Activated B cell treated with CpG ODN at 0.5 μM for 24 hours (primary cell): ENCODE measurements at regions of chr11 and their contacts with region 1.

Region 1: DNA sequence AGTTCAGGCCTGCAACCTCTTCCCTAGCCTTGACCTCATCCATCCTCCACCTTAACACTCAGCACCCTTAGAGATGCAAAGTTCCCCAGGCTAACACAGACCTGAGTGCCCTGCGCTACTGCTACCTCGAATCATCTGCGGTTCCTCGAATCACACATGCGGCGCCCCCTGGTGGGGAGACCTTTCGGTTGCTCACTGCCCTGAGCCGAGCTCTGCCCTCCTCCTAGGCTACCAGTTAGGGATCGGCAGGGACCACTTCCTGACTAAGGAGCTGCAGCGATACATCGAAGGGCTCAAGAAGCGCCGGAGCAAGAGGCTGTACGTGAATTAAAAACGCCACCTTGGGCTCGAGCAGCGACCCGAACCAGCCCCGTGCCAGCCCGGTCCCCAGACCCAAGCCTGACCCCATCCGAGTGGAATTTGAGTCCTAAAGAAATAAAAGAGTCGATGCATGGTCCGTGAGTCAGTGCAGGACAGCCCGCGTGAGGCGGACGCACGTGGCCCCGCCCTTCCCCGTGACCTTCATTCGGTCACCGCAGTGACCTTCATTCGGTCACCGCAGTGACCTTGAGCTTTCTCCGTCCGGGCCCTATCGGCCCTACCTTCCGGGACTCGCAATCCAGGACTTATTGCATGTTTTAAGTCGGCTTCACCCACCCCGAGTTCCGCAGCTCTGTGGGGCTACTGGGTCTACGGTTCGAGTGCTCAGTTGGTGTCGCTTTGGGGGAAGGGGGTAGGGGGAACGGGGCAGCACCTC is 830 bp upstream of the ESRRA start:
- DNase-seq: peak; percentile 84
- ATAC-seq: peak; percentile 13
- H3K4me3 Mint-ChIP-seq: peak overlapping the region; percentile 87
- H3K27ac Mint-ChIP-seq: peak overlapping the region; percentile 89
- H3K4me1 Mint-ChIP-seq: peaks cover 34% of the 10 kb centered on the region
- H3K27me3 Mint-ChIP-seq: peaks cover 11% of the 10 kb centered on the region
- CTCF ChIP-seq: peak; percentile 22

Region 2: DNA sequence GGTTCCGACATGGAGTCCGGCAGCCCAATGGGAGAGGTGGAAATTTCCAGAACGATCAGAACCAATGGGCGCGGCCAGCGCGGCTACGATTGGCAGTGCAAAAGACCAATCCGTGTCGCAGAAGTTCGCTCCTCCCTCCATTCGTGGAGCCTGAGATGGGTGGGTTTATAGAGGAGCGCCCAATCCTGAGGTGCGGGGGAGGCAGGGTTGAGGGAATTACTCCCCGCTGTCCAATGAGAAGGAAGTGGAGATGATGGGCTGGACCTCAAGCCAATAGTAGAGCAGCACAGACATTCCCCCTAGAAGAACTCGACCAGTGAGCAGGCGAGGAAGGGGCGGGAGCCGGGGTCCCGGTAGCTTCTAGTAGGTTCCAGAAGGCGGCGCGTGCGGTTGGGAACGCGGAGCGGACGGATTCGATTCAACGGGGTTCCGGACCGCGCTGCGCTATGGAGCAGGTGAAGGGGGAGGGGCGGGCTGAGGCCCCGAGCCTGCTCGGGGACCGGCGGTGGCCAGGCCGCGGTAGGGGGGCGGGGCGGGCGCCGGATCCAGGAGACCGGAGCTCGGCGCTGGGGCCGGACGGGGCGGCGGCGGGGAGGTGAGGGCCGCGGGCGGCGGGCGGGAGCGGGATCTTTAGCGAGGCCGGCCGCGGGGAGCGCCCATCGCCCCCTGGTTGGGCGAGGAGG is 118.5 kb before region 1 on chr11 and contains the start of gene STIP1:
- CTCF ChIA-PET with region 1: interaction called, 4 read pairs
- POLR2A ChIA-PET with region 1: interaction called, 12 read pairs
- intact Hi-C with region 1: loop called (anchors 1 kb)
- DNase-seq: peak; percentile 93
- ATAC-seq: peak; percentile 87
- H3K4me3 Mint-ChIP-seq: no peak within 1 kb of the TSS
- H3K27ac Mint-ChIP-seq: peak within 1 kb of the TSS; percentile 97
- H3K4me1 Mint-ChIP-seq: peaks cover 27% of the 10 kb centered on the region
- H3K27me3 Mint-ChIP-seq: no peaks in the 10 kb centered on the region
- CTCF ChIP-seq: no peak
- total RNA-seq, gene STIP1: 155 and 159 TPM in 2 replicates

Region 3: GRCh38 chr11:64240394-64241174 is 63.9 kb before region 1 on chr11 and contains the start of gene FKBP2:
- CTCF ChIA-PET with region 1: interaction called, 4 read pairs
- POLR2A ChIA-PET with region 1: interaction called, 24 read pairs
- intact Hi-C with region 1: loop called (anchors 1 kb)
- DNase-seq: peak; percentile 98
- ATAC-seq: peak; percentile 61
- H3K4me3 Mint-ChIP-seq: peak within 1 kb of the TSS; percentile 91
- H3K27ac Mint-ChIP-seq: peak within 1 kb of the TSS; percentile 98
- H3K4me1 Mint-ChIP-seq: peaks cover 75% of the 10 kb centered on the region
- H3K27me3 Mint-ChIP-seq: no peaks in the 10 kb centered on the region
- CTCF ChIP-seq: no peak
- total RNA-seq, gene FKBP2: 31.4 and 39.4 TPM in 2 replicates

Region 4: GRCh38 chr11:64284048-64284961 is 20.2 kb before region 1 on chr11 and contains the start of gene BAD:
- CTCF ChIA-PET with region 1: interaction called, 11 read pairs
- POLR2A ChIA-PET with region 1: interaction called, 24 read pairs
- intact Hi-C with region 1: loop called (anchors 1 kb)
- DNase-seq: peak; percentile 80
- ATAC-seq: peak; percentile 79
- H3K4me3 Mint-ChIP-seq: peak within 1 kb of the TSS; percentile 90
- H3K27ac Mint-ChIP-seq: peak within 1 kb of the TSS; percentile 92
- H3K4me1 Mint-ChIP-seq: peaks cover 20% of the 10 kb centered on the region
- H3K27me3 Mint-ChIP-seq: no peaks in the 10 kb centered on the region
- CTCF ChIP-seq: no peak
- total RNA-seq, gene BAD: 21.7 and 26.6 TPM in 2 replicates

Region 5: DNA sequence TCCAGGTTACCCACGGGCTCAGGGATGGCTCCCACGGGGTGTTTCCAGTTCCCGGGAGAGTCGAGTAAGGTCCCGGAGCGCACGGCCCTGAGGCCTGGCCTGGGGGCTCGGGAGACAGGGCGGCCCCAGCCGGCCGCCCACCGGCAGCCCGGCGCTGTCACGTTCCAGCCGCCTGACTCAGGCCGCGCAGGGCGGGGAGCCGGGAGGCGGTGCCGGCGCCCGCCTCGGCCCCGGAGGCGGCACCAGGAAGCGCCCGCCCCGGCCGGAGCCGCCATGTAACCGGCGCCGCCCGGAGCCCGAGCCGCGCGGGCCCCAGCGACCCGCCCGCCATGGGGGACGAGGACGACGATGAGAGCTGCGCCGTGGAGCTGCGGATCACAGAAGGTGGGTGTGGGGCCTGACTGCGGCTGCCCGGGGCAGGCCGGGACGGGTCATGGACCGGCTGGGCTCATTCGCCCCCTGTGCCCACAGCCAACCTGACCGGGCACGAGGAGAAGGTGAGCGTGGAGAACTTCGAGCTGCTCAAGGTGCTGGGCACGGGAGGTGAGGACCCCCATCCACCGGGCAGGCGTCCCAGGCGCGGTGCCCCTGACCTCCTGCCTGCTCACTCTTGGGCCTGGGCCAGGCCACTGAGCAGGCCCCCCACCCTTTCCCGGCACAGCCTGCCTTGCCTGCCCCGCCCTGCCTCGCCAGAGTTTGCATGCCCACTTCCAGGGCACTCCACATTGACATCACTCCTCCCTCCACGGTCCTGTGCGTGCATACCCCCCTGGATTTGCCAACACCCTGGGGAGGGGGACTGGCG is 54.6 kb after region 1 on chr11 and contains the start of gene RPS6KA4:
- CTCF ChIA-PET with region 1: interaction called, 14 read pairs
- POLR2A ChIA-PET with region 1: interaction called, 10 read pairs
- intact Hi-C with region 1: loop called (anchors 1 kb)
- DNase-seq: peak; percentile 55
- ATAC-seq: peak; percentile 72
- H3K4me3 Mint-ChIP-seq: peak within 1 kb of the TSS; percentile 82
- H3K27ac Mint-ChIP-seq: peak within 1 kb of the TSS; percentile 53
- H3K4me1 Mint-ChIP-seq: peaks cover 47% of the 10 kb centered on the region
- H3K27me3 Mint-ChIP-seq: no peaks in the 10 kb centered on the region
- CTCF ChIP-seq: no peak
- total RNA-seq, gene RPS6KA4: 18.0 and 22.6 TPM in 2 replicates